ENCODE measurements at regions of chr14 and their contacts with region 1.

Region 1: DNA sequence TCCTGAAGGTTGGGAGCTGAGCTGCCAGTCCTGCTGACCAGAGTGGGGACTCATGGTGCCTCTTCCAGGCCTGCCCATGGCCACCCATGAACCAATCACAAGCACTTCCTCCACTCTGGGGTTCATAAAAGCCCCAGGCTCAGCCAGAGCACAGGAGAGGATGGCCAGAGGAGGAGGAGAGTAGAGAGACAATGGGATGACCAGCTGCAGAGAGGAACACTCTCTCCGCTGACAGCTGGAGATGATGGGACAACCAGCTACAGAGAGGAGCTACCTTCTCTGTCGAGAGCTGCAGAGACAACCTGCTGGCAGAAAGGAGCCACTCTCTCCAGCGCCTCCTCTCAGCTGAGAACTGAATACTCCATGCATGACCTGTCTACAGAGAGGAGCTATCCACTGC is 886.1 kb downstream of the BCL11B start:
- DNase-seq: no peak
- H3K4me3 ChIP-seq: no peak overlapping the region
- H3K27ac ChIP-seq: no peak overlapping the region
- H3K27me3 ChIP-seq: peaks cover 0 to 28% (median 7%) of the 10 kb centered on the region in 45 donors
- CTCF ChIP-seq: no peak

Region 2: GRCh38 chr14:97077253-97077653 is 1308.6 kb before region 1 on chr14:
- intact Hi-C with region 1: no loop called
- DNase-seq: peak in 4 of 10 donors; percentile 17 to 34 (median 28)
- H3K4me3 ChIP-seq: no peak overlapping the region
- H3K27ac ChIP-seq: no peak overlapping the region
- H3K27me3 ChIP-seq: peaks cover 0 to 14% (median 0%) of the 10 kb centered on the region in 45 donors
- CTCF ChIP-seq: no peak

Region 3: GRCh38 chr14:98428483-98428994 is 42.7 kb after region 1 on chr14:
- intact Hi-C with region 1: loop called in 1 of 2 experiments (anchors 2 kb)
- DNase-seq: no peak
- H3K4me3 ChIP-seq: no peak overlapping the region
- H3K27ac ChIP-seq: no peak overlapping the region
- H3K27me3 ChIP-seq: peaks cover 0 to 18% (median 0%) of the 10 kb centered on the region in 45 donors
- CTCF ChIP-seq: no peak

Region 4: GRCh38 chr14:98580131-98580678 is 194.4 kb after region 1 on chr14:
- intact Hi-C with region 1: no loop called
- DNase-seq: no peak
- H3K4me3 ChIP-seq: no peak overlapping the region
- H3K27ac ChIP-seq: no peak overlapping the region
- H3K27me3 ChIP-seq: peaks cover 0 to 34% (median 6%) of the 10 kb centered on the region in 45 donors
- CTCF ChIP-seq: no peak

Measured in dorsolateral prefrontal cortex (tissue), 120 donors.